ENCODE measurements at regions of chr10 and their contacts with region 1.

Region 1: DNA sequence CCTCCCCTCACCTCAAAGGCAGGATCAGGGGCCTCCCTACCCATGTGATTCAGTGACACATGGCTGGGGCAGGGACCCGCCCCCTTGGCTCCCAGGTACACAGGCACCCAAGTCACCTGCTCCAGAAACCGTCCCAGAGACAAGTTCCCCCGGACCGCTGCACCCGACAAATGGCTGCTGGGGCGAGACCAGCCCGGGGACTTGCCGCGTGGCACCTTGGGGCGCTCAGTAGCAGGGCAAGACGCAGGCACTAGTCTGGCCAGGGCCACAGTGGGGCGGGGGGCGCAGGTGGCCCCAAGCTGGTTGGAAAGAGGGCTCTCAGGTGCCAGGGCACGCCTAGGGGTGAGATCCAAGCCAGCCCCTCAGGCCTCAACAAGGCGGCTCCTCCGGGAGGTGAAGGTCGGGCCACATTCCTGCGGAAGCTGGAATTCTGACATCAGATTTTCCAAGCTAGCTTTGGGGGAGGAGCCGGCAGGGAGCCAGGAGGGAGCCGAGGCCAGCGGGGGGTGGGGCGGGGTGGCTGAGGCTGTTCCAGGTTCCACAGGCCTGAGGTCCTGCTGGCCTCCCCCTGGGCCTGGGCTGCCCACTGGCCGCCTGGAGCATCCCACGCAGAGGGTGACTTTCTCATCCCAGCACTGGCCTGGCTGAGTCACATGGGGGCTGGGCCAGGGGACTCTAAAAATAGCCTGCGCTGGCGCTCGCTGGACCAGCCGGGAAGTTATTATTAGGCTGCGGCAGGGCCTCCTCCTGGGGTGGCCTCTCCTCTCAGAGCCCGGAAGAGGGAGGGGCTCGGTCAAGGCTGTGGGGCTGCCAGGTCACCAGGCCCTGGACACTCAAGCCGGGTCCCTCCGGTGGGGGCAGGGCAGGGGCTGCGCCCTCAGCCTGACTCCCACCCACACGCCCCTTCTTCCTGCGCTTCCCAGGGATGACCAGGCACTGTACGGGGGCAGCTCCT is 20.5 kb upstream of the INPP5A start:
- DNase-seq: peak; percentile 97
- H3K4me3 ChIP-seq: peak overlapping the region; percentile 21 to 43 (median 28)
- H3K27ac ChIP-seq: peak overlapping the region; percentile 89 to 97 (median 96)
- H3K4me1 ChIP-seq: peaks cover 69 to 73% (median 72%) of the 10 kb centered on the region in 4 donors
- H3K27me3 ChIP-seq: no peaks in the 10 kb centered on the region
- CTCF ChIP-seq: no peak
- EP300 ChIP-seq: no peak
- POLR2A ChIP-seq: no peak

Region 2: GRCh38 chr10:132464253-132465192 is 52.5 kb before region 1 on chr10:
- intact Hi-C with region 1: loop called (anchors 5 kb)
- DNase-seq: peak; percentile 97
- H3K4me3 ChIP-seq: peak overlapping the region; percentile 3 to 28 (median 14)
- H3K27ac ChIP-seq: peak overlapping the region; percentile 96 to 100 (median 97)
- H3K4me1 ChIP-seq: peaks cover 71 to 98% (median 90%) of the 10 kb centered on the region in 4 donors
- H3K27me3 ChIP-seq: no peaks in the 10 kb centered on the region
- CTCF ChIP-seq: no peak
- EP300 ChIP-seq: peak; percentile 46
- POLR2A ChIP-seq: no peak

Measured in esophagus muscularis mucosa (tissue), 4 donors.